Activated B cell treated with CpG ODN at 0.5 μM for 24 hours (primary cell): ENCODE measurements at regions of chr18 and their contacts with region 1.

Region 1: GRCh38 chr18:50297621-50298442 is 10.3 kb upstream of the CXXC1 start:
- DNase-seq: peak; percentile 73
- ATAC-seq: peak; percentile 99
- H3K4me3 Mint-ChIP-seq: peak overlapping the region; percentile 83
- H3K27ac Mint-ChIP-seq: peak overlapping the region; percentile 41
- H3K4me1 Mint-ChIP-seq: peaks cover 14% of the 10 kb centered on the region
- H3K27me3 Mint-ChIP-seq: no peaks in the 10 kb centered on the region
- CTCF ChIP-seq: no peak

Region 2: GRCh38 chr18:50315100-50315871 is 17.5 kb after region 1 on chr18:
- CTCF ChIA-PET with region 1: no interaction called
- POLR2A ChIA-PET with region 1: no interaction called
- intact Hi-C with region 1: loop called (anchors 1 kb)
- DNase-seq: no peak
- ATAC-seq: peak; percentile 78
- H3K4me3 Mint-ChIP-seq: peak overlapping the region; percentile 42
- H3K27ac Mint-ChIP-seq: peak overlapping the region; percentile 19
- H3K4me1 Mint-ChIP-seq: peaks cover 69% of the 10 kb centered on the region
- H3K27me3 Mint-ChIP-seq: no peaks in the 10 kb centered on the region
- CTCF ChIP-seq: no peak